Heart left ventricle (tissue), 16 donors: ENCODE measurements at regions of chr11 and their contacts with region 1.

Region 1: GRCh38 chr11:6505577-6506240 is 8.6 kb downstream of the DNHD1 start:
- DNase-seq: no peak
- ATAC-seq: peak in 3 of 4 donors; percentile 64 to 72 (median 66)
- H3K4me3 ChIP-seq: no peak overlapping the region
- H3K27ac ChIP-seq: no peak overlapping the region
- H3K4me1 ChIP-seq: no peaks in the 10 kb centered on the region
- H3K27me3 ChIP-seq: no peaks in the 10 kb centered on the region
- CTCF ChIP-seq: peak; percentile 60 to 83 (median 75)
- POLR2A ChIP-seq: no peak

Region 2: DNA sequence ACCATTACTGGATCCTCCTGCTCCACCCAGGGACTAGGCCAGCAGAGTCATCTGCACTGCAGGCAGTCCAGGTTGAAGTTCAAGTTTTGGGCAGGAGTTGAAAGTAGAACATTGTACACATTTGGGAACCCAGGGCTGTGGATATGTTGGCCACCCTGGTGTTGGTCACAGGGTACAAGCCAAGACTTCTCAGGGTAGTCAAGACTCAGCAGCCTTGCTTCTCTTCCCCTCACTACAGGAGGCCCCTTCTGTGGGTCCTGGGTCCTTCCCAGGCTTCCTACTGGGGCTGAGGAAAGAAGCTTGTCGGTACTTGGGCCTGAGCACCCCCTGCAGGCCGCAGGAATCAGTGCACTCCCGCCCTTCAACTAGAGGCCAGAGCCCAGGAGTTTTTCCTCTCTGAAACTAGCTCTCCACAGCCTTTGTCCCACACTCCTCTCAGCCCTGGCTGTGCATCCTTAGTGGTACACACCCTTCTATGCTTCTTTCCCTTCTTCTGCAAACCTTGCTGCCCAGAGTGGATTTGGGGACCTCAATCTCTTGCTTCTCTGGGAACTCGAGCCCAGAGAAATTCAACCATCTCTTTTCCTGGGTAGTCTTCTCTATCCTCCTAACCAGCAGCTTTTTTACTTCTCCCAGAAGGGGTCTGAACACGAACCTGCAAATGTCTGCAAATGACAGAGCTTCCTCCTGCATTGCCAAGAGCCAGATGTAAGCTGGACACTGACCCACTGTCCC is 62.3 kb before region 1 on chr11:
- intact Hi-C with region 1: loop called in 9 of 10 experiments (anchors 2 to 10 kb)
- DNase-seq: peak; percentile 40 to 70 (median 44)
- ATAC-seq: peak in 3 of 4 donors; percentile 81 to 87 (median 83)
- H3K4me3 ChIP-seq: no peak overlapping the region
- H3K27ac ChIP-seq: no peak overlapping the region
- H3K4me1 ChIP-seq: peaks cover 0 to 5% (median 0%) of the 10 kb centered on the region in 12 donors
- H3K27me3 ChIP-seq: no peaks in the 10 kb centered on the region
- CTCF ChIP-seq: peak; percentile 66 to 90 (median 80)
- POLR2A ChIP-seq: no peak

Region 3: GRCh38 chr11:6489306-6489705 is 16.4 kb before region 1 on chr11:
- intact Hi-C with region 1: no loop called
- DNase-seq: no peak
- ATAC-seq: no peak
- H3K4me3 ChIP-seq: no peak overlapping the region
- H3K27ac ChIP-seq: no peak overlapping the region
- H3K4me1 ChIP-seq: no peaks in the 10 kb centered on the region
- H3K27me3 ChIP-seq: no peaks in the 10 kb centered on the region
- CTCF ChIP-seq: no peak
- POLR2A ChIP-seq: no peak

Region 4: GRCh38 chr11:7364660-7365059 is 859.0 kb after region 1 on chr11:
- intact Hi-C with region 1: no loop called
- DNase-seq: no peak
- ATAC-seq: no peak
- H3K4me3 ChIP-seq: no peak overlapping the region
- H3K27ac ChIP-seq: no peak overlapping the region
- H3K4me1 ChIP-seq: no peaks in the 10 kb centered on the region
- H3K27me3 ChIP-seq: no peaks in the 10 kb centered on the region
- CTCF ChIP-seq: no peak
- POLR2A ChIP-seq: no peak